Activated CD4-positive, alpha-beta memory T cell treated with anti-CD3 and anti-CD28 coated beads for 36 hours (primary cell): ENCODE measurements at regions of chr5 and their contacts with region 1.

Region 1: DNA sequence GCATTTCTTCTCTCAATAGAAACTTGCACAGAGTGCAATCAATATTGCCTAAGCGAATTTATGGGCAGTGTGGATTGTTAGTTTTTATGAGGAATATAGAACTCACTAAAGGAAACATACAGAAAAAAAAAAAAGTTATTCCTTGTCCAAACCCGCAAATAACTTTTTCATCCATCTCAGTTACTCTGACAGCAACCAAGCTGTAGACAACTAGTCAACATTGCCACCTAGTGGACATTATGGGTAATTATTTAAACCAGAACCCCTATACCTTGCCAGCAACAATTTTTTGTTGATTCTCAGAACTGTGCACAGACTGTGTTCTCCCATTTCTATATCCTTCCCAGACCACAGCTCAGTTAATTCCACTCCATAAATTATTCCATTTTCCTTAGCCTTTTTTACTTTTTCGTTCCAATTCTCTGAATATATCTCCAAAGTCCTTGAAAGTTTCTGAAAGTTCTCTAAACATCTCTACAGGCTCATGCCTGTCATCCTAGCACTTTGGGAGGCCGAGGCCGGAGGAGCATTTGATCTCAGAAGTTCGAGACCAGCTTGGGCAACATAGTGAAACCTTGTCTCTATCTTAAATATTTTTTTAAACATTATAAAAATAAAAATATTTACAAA is 2.6 kb upstream of the AFAP1L1 start:
- DNase-seq: no peak
- H3K4me3 Mint-ChIP-seq: no peak overlapping the region
- H3K27ac Mint-ChIP-seq: no peak overlapping the region
- H3K4me1 Mint-ChIP-seq: peaks cover 12% of the 10 kb centered on the region
- H3K27me3 Mint-ChIP-seq: peaks cover 23% of the 10 kb centered on the region

Region 2: GRCh38 chr5:149135536-149136201 is 133.4 kb before region 1 on chr5:
- CTCF ChIA-PET with region 1: interaction called, 103 read pairs
- POLR2A ChIA-PET with region 1: no interaction called
- intact Hi-C with region 1: no loop called
- DNase-seq: no peak
- H3K4me3 Mint-ChIP-seq: no peak overlapping the region
- H3K27ac Mint-ChIP-seq: no peak overlapping the region
- H3K4me1 Mint-ChIP-seq: no peaks in the 10 kb centered on the region
- H3K27me3 Mint-ChIP-seq: peaks cover 11% of the 10 kb centered on the region

Region 3: GRCh38 chr5:149188383-149188782 is 80.7 kb before region 1 on chr5:
- CTCF ChIA-PET with region 1: no interaction called
- POLR2A ChIA-PET with region 1: no interaction called
- intact Hi-C with region 1: no loop called
- DNase-seq: no peak
- H3K4me3 Mint-ChIP-seq: no peak overlapping the region
- H3K27ac Mint-ChIP-seq: no peak overlapping the region
- H3K4me1 Mint-ChIP-seq: no peaks in the 10 kb centered on the region
- H3K27me3 Mint-ChIP-seq: no peaks in the 10 kb centered on the region

Region 4: DNA sequence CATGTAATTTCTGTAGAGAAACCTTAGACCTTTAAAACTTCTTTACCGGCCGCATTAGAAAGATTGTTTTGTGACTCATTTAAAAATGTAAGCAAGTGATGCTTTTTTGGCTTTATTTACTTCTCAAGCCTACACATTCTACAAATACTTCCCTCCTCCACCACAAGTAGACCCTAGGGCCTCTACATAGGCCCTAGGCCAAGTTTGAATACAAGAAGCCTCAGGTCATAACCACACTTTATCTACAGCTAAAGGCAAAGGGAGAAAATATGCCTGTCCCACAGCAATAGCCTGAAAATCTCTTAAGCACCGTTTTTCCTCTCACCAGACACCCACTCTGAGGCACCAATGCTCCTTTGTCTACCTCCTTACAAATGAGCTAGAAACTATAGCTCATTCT is 228.3 kb after region 1 on chr5:
- CTCF ChIA-PET with region 1: no interaction called
- POLR2A ChIA-PET with region 1: no interaction called
- intact Hi-C with region 1: no loop called
- DNase-seq: no peak
- H3K4me3 Mint-ChIP-seq: no peak overlapping the region
- H3K27ac Mint-ChIP-seq: peak overlapping the region; percentile 26
- H3K4me1 Mint-ChIP-seq: no peaks in the 10 kb centered on the region
- H3K27me3 Mint-ChIP-seq: no peaks in the 10 kb centered on the region